ENCODE measurements at regions of chr4 and their contacts with region 1.

Region 1: GRCh38 chr4:166981847-166982246 is 252.4 kb downstream of the SPOCK3 start:
- DNase-seq: no peak
- ATAC-seq: no peak
- H3K4me3 Mint-ChIP-seq: no peak overlapping the region
- H3K27ac Mint-ChIP-seq: no peak overlapping the region
- H3K4me1 Mint-ChIP-seq: no peaks in the 10 kb centered on the region
- H3K27me3 Mint-ChIP-seq: no peaks in the 10 kb centered on the region
- CTCF ChIP-seq: no peak

Region 2: GRCh38 chr4:166903408-166903807 is 78.4 kb before region 1 on chr4:
- CTCF ChIA-PET with region 1: no interaction called
- POLR2A ChIA-PET with region 1: no interaction called
- intact Hi-C with region 1: loop called (anchors 2 kb)
- DNase-seq: no peak
- ATAC-seq: no peak
- H3K4me3 Mint-ChIP-seq: no peak overlapping the region
- H3K27ac Mint-ChIP-seq: no peak overlapping the region
- H3K4me1 Mint-ChIP-seq: no peaks in the 10 kb centered on the region
- H3K27me3 Mint-ChIP-seq: no peaks in the 10 kb centered on the region
- CTCF ChIP-seq: no peak

Measured in activated B cell treated with CpG ODN at 0.5 μM for 24 hours (primary cell).